Posterior vena cava (tissue), 2 donors: ENCODE measurements at regions of chr3 and their contacts with region 1.

Region 1: DNA sequence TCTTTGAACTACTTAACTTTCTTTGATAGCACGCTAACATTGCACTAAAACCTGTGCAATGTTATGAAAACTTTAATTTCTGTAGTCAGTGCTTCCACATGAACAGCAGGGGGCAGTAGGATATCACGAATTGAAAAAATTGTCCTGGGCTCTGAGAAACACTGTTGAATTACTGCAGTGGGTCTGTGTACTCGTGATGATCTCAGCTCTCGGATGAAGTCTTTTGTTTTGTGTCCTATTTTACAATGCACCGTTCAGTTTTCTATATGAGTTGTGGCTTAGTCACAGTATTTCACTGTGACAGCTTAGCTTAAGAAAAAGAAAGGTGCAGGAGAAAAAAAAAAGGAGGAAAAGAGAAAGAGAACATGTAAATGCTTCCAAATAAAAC is 141.3 kb upstream of the CCDC54 start:
- DNase-seq: no peak

Region 2: GRCh38 chr3:105274958-105275357 is 1961.0 kb before region 1 on chr3:
- intact Hi-C with region 1: no loop called
- DNase-seq: no peak

Region 3: GRCh38 chr3:107153981-107154380 is 81.9 kb before region 1 on chr3:
- intact Hi-C with region 1: loop called in 1 of 2 experiments (anchors 2 kb)
- DNase-seq: no peak

Region 4: DNA sequence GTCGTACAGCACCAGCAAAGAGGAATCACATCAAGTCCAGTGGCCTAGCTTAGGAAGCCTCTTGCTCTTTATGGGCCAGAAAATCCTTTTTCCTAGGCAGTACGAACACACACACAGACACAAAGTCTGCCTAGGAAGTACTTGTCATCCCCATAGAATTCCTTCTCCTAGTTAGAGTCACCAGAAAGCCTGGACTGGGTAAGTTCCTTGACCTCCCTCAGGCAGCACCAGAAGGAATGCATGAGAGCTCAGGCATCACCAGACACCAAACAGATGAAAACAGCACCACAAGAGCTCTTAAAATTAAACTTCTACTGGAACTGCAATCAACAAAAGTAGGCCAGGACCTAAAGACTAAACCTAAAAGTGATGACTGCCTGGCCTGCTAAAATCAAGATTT is 51.5 kb before region 1 on chr3:
- intact Hi-C with region 1: no loop called
- DNase-seq: no peak

Region 5: GRCh38 chr3:107308716-107309115 is 72.8 kb after region 1 on chr3:
- intact Hi-C with region 1: no loop called
- DNase-seq: no peak

Region 6: DNA sequence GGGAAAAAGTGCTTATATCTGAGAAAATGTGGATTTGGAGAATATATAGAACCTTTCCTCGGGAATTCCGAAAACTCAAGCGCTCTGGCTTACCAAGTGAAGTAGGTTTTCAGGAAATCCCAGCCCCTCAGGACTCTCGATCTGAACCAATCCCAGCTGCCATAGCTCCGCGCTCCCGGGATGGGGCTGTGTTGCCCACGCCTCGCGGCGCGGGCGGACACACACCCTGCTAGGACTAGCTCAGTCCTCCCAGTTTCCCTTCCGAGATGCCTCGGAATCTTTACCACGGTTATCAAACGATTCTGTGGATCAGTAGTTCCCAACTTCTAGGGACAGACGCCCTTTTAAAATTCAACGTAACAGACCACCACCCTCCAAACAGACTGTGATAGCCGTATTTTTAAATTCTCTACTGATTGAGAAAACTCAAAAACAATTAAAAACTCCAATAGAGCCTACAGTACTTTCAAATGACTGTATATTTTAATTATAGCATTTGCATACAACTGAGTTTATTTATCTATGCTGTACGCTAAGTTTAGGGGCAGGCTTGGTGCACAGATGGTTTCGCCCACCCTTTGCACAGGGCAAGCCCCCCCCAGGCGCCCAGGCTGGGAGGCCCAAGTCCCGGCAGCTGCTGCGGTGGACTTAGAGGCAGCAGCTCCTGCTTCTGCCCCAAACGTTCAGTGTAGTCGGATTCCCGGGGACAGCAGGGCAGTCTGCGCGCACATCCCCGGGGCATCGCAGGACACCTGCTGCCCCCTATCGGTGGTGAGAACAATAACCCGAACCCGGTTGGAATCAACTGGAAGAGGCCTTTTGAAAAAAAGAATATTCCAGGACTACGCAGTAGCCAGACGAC is 193.6 kb after region 1 on chr3:
- intact Hi-C with region 1: loop called in 1 of 2 experiments (anchors 10 kb)
- DNase-seq: peak; percentile 88

Region 7: DNA sequence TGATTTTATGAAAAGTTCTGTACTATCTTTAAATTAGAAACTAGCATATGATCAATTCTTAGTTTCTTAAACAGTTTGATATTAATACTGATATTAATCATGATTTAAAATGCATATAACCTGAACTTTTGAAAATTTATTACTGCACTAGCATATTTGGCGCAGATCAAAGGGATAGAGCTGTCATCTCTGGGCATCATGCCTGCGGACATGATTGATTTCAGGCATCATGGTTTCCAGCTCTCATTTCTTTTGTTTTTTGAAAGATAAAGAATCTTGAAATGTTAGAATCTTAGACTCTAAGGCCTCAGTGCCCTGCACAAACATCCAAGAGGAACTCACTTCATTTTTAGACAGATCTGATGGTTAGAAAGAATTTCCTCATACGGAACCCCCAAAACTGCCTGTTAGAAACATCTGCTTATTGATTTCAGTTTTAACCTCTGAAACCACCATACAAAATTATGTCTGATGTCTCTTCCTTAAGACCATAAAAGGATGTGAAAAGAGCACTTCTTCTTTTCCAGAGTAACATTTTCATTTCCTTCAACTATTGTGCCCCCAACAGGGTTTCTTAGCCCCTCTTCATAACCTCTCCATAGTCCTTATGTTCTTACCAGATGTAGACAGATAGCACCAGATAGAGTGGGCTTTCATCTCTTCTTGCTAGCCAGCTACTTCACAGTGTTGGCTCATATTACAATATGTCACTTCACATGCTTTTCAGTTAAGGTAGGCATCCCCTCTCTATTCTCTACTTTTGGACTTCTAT is 397.6 kb after region 1 on chr3:
- intact Hi-C with region 1: no loop called
- DNase-seq: no peak